PC-3 (cell line): ENCODE measurements at regions of chr19 and their contacts with region 1.

Region 1: GRCh38 chr19:4186087-4186993 is 3.9 kb downstream of the ANKRD24 start:
- DNase-seq: peak; percentile 78
- ATAC-seq: peak; percentile 73
- H3K4me3 ChIP-seq: no peak overlapping the region
- H3K27ac ChIP-seq: no peak overlapping the region
- H3K4me1 ChIP-seq: peaks cover under 1% of the 10 kb centered on the region; the same call in 1 of the 2 replicates
- H3K27me3 ChIP-seq: no peaks in the 10 kb centered on the region
- CTCF ChIP-seq: peak; percentile 76

Region 2: DNA sequence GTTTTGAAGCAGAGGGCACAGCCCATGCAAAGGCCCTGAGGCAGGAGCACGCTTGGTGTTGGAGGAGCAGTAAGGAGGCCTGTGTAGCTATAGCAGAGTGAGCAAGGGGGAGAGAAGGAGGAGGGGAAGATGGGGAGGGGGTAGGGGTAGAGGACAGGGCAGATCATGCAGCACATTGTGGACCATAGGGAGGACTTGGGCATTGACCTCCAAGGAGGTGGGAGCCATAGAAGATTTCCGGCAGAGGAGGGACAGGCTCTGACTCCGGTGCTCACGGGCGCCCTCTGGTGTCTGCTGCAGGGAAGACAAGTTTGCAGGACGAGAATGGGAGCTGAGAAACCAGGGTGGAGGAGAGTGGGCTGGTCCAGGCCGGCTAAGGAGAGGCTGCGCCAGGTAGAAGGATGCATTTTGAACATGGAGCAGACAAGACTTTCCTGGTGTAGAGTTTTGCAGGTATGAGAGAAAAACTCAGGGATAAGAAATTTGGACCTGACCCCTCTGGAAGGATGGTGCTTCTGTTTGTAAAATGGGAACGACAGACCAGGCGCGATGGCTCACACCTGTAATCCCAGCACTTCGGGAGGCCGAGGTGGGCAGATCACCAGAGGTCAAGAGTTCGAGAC is 46.6 kb before region 1 on chr19:
- CTCF ChIA-PET with region 1: no interaction called
- POLR2A ChIA-PET with region 1: no interaction called
- intact Hi-C with region 1: loop called (anchors 5 kb)
- DNase-seq: peak; percentile 71
- ATAC-seq: peak; percentile 84
- H3K4me3 ChIP-seq: 0 out of 2 replicates have a peak overlapping the region, but pooled peaks have one; percentile 21
- H3K27ac ChIP-seq: no peak overlapping the region
- H3K4me1 ChIP-seq: peaks cover 3% of the 10 kb centered on the region
- H3K27me3 ChIP-seq: no peaks in the 10 kb centered on the region
- CTCF ChIP-seq: peak; percentile 73